Naive thymus-derived CD8-positive, alpha-beta T cell (primary cell): ENCODE measurements at regions of chr6 and their contacts with region 1.

Region 1: DNA sequence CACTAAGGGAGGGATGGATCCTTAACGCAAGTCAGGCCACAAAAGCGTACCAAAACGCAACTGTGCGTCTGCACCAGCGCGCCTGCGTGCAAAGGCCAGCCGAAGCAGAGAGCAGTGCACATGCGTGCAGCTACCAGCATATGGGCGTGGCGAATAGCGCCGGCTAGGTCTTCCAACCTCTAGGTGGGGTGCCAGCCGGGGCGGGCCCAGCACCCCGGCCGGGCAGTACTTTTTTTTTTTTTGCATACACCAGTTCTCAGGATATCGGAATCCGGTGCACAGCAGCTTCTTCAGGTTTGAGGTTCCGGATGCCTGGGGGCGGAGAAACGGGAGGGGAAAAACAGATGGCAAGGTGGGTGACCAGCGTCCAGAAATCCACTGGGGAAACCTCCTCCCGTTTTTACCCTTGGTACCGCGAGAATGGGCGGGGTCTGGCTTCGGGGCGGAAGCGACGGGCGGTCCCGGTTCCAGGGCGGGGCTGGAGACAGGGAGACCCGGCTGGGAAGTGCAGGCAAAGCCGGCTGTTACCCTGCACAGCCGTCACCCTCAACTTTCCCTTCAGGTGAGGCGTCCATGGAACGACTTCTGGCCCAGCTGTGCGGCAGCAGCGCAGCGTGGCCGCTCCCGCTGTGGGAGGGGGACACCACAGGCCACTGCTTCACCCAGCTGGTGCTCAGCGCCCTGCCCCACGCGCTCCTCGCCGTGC is at the start of gene ABCC10:
- DNase-seq: peak; percentile 89 to 97 (median 96)
- ATAC-seq: peak; percentile 90 to 92
- H3K4me3 Mint-ChIP-seq: peak within 1 kb of the TSS; percentile 87 to 97 (median 95)
- H3K27ac Mint-ChIP-seq: peak within 1 kb of the TSS; percentile 92 to 100 (median 98)
- H3K4me1 Mint-ChIP-seq: peaks cover 14 to 33% (median 26%) of the 10 kb centered on the region in 4 donors
- H3K27me3 Mint-ChIP-seq: no peaks in the 10 kb centered on the region
- polyA plus RNA-seq, gene ABCC10: 9.6 to 15.9 (median 10.6) TPM

Region 2: GRCh38 chr6:43369174-43370022 is 58.2 kb before region 1 on chr6 and contains the start of gene ZNF318:
- POLR2A ChIA-PET with region 1: interaction called, 17 read pairs
- DNase-seq: peak; percentile 89 to 96 (median 92)
- ATAC-seq: peak; percentile 91 to 95
- H3K4me3 Mint-ChIP-seq: peak within 1 kb of the TSS; percentile 51 to 96 (median 93)
- H3K27ac Mint-ChIP-seq: peak within 1 kb of the TSS; percentile 92 to 98 (median 97)
- H3K4me1 Mint-ChIP-seq: peaks cover 23 to 72% (median 49%) of the 10 kb centered on the region in 4 donors
- H3K27me3 Mint-ChIP-seq: no peaks in the 10 kb centered on the region
- polyA plus RNA-seq, gene ZNF318: 3.4 to 7.0 (median 5.7) TPM

Region 3: DNA sequence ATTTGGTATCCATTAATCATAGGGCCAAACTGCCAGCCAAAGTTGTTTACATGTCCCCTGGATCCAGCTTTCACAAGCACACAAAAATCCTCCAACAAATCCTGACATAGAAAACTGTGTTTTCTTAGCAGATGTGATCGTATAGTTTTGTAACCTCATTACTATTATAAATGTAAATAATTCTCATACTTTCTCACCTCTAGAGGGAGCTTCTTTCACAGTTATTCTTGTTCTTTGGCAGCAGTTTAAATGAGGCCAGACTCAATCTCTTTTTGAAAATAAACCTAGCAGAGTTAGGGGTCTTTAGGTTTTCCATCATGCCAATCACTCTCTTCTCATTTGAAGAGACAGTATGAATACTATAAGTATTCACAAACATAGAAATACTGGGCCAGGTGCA is 41.1 kb before region 1 on chr6:
- POLR2A ChIA-PET with region 1: interaction called, 11 read pairs
- DNase-seq: peak in 2 of 10 donors; percentile 45 to 62
- ATAC-seq: no peak
- H3K4me3 Mint-ChIP-seq: no peak overlapping the region
- H3K27ac Mint-ChIP-seq: peak overlapping the region in 8 of 10 donors; percentile 26 to 88 (median 52)
- H3K4me1 Mint-ChIP-seq: peaks cover 28 to 71% (median 66%) of the 10 kb centered on the region in 4 donors
- H3K27me3 Mint-ChIP-seq: peaks cover 2 to 13% (median 3%) of the 10 kb centered on the region in 5 donors

Region 4: GRCh38 chr6:43416935-43417334 is 10.6 kb before region 1 on chr6:
- POLR2A ChIA-PET with region 1: interaction called, 11 read pairs
- DNase-seq: no peak
- ATAC-seq: no peak
- H3K4me3 Mint-ChIP-seq: no peak overlapping the region
- H3K27ac Mint-ChIP-seq: no peak overlapping the region
- H3K4me1 Mint-ChIP-seq: no peaks in the 10 kb centered on the region
- H3K27me3 Mint-ChIP-seq: peaks cover 0 to 8% (median 2%) of the 10 kb centered on the region in 5 donors

Region 5: GRCh38 chr6:43447604-43448003 is 20.0 kb after region 1 on chr6:
- POLR2A ChIA-PET with region 1: no interaction called
- DNase-seq: no peak
- ATAC-seq: no peak
- H3K4me3 Mint-ChIP-seq: no peak overlapping the region
- H3K27ac Mint-ChIP-seq: peak overlapping the region in 2 of 10 donors; percentile 29 to 31
- H3K4me1 Mint-ChIP-seq: peaks cover 0 to 2% (median 0%) of the 10 kb centered on the region in 4 donors
- H3K27me3 Mint-ChIP-seq: no peaks in the 10 kb centered on the region

Region 6: DNA sequence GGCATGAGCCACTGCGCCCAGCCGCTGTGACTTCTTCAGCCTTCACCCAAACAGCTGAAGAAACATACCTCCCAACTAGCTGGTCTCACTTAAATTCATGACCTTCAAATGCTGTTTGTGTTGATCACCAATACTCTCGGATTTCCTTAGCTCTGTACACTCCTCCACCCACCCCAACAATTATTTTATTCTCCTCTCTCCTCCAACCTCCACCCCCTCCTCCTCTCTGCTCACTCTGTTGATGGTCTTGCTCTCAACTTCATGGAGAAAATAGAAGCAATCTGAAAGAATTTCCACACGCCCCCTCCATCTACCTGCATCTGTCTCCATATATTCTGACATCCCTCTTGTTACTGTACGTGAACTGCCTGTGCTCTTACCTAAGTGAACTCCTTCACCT is 34.4 kb after region 1 on chr6:
- POLR2A ChIA-PET with region 1: no interaction called
- DNase-seq: no peak
- ATAC-seq: no peak
- H3K4me3 Mint-ChIP-seq: no peak overlapping the region
- H3K27ac Mint-ChIP-seq: peak overlapping the region in 1 of 10 donors; percentile 19
- H3K4me1 Mint-ChIP-seq: peaks cover under 1 to 2% (median 1%) of the 10 kb centered on the region in 4 donors
- H3K27me3 Mint-ChIP-seq: peaks cover 14 to 39% (median 23%) of the 10 kb centered on the region in 5 donors

Region 7: DNA sequence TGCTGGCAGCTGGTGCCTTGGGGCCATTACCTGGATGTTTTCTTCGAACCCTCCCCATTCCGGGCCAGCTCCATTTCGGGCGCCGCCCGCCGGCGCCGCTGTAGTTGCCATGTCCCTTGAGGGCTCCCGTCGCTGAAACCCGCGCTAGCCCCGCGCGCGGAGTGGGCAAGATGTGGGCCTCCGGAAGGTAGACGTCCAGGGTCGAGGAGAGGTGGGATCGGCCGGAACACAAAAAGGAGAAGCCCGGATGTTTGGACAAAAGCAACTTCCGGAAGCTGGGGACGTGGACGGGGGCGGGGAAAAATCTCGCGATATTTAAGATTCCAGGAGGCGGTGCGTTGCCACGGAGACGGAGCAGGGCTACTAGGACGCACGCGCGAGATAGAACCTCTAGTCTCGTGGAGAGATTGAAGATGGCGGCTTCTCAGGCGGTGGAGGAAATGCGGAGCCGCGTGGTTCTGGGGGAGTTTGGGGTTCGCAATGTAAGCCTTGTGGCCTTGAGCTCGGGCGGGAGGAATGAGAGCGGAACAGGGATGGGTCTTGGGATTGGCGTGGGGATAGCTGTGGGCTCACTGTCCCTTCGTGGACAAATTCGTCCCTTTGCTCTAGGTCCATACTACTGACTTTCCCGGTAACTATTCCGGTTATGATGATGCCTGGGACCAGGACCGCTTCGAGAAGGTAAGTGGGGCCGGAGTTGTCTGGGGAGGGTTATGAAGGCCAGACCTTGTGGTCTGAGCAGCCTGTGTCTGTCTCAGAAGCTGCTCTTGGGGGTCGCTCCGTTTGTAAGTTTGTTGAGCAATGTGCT is 89.3 kb after region 1 on chr6 and contains the starts of genes POLR1C and YIPF3:
- POLR2A ChIA-PET with region 1: interaction called, 13 read pairs
- DNase-seq: peak; percentile 87 to 98 (median 96)
- ATAC-seq: peak; percentile 95 to 96
- H3K4me3 Mint-ChIP-seq: no peak within 1 kb of the TSS
- H3K27ac Mint-ChIP-seq: peak within 1 kb of the TSS in 1 of 10 donors; percentile 34
- H3K4me1 Mint-ChIP-seq: peaks cover 5 to 17% (median 10%) of the 10 kb centered on the region in 4 donors
- H3K27me3 Mint-ChIP-seq: no peaks in the 10 kb centered on the region
- polyA plus RNA-seq, gene POLR1C: 9.4 to 23.2 (median 14.6) TPM
- polyA plus RNA-seq, gene YIPF3: 58.4 to 70.4 (median 68.3) TPM